ENCODE measurements at regions of chr11 and their contacts with region 1.

Region 1: GRCh38 chr11:95584589-95584988 is 205.0 kb downstream of the FAM76B start:
- DNase-seq: no peak
- H3K4me3 Mint-ChIP-seq: no peak overlapping the region
- H3K27ac Mint-ChIP-seq: peak overlapping the region; percentile 10
- H3K4me1 Mint-ChIP-seq: peaks cover 34% of the 10 kb centered on the region
- H3K27me3 Mint-ChIP-seq: no peaks in the 10 kb centered on the region

Region 2: GRCh38 chr11:95563859-95564258 is 20.7 kb before region 1 on chr11:
- intact Hi-C with region 1: loop called (anchors 1 kb)
- DNase-seq: no peak
- H3K4me3 Mint-ChIP-seq: no peak overlapping the region
- H3K27ac Mint-ChIP-seq: peak overlapping the region; percentile 64
- H3K4me1 Mint-ChIP-seq: peaks cover 38% of the 10 kb centered on the region
- H3K27me3 Mint-ChIP-seq: no peaks in the 10 kb centered on the region

Region 3: DNA sequence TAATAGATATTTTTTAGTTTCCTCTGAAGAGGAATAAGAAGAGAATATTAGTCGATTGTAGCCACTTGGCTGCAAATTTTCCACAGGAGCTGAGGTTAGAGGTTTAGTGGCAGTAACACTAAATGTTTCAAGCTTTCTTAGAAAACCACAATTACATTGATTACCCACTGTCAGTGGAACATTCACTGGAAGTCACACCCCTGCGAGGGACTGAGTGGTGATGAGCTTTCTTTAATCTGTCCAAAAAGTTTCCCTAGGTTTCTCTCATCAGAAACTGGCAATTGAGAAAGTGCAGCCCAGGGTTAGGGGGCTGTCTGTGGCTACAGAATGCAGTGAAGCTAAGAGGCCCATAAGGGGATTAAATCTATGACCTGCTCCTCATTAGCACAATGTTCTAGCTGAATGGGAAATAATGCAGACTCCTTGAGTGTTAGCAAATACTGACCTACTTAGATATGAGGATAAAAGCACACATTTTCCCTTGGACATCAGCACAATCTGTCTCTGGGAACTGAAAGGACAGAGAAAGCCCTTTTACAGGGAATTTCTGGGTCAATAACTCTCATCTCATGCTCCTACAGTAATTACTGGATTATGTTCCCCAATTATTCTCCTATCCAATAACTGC is 15.5 kb after region 1 on chr11:
- intact Hi-C with region 1: loop called (anchors 2 kb)
- DNase-seq: no peak
- H3K4me3 Mint-ChIP-seq: no peak overlapping the region
- H3K27ac Mint-ChIP-seq: peak overlapping the region; percentile 84
- H3K4me1 Mint-ChIP-seq: peaks cover 21% of the 10 kb centered on the region
- H3K27me3 Mint-ChIP-seq: no peaks in the 10 kb centered on the region

Region 4: DNA sequence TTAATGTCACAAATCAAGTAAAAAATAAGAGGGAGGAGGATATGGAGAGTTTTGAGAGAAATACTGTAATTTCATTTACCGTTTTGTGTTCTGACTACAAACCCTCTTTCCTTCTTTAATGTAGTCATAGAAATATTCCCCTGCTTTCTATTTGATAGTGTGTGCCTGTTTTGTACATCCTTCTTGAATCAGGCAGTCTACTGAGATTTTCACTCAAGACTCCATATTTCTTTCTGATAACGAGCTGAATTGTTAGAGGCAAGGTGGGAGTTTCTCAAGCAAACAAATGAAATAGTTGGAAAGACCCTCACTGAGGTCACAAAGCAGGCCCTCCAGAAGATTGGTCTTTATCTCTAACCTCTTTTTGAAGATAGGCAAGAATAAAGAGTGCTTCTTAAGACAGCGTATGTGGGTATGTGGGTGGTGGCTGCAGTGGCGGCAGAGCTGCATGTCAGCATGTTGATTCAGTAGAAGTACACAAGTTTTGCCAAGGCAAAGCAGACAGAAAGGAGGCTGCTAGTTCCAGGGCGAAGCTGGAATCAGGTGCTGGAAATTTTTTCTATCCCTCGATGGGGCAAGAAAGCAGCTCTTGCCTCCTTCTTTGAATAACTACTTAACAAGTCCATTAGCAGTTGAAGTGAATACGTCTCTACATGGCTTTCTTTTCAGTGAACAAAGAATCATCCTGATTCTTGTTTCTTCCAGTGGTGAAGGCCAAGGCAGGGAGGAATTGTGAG is 40.7 kb after region 1 on chr11:
- intact Hi-C with region 1: loop called (anchors 2 kb)
- DNase-seq: no peak
- H3K4me3 Mint-ChIP-seq: no peak overlapping the region
- H3K27ac Mint-ChIP-seq: no peak overlapping the region
- H3K4me1 Mint-ChIP-seq: peaks cover 7% of the 10 kb centered on the region
- H3K27me3 Mint-ChIP-seq: peaks cover 2% of the 10 kb centered on the region